Calu3 (cell line): ENCODE measurements at regions of chr2 and their contacts with region 1.

Region 1: GRCh38 chr2:96509114-96509846 is 4.1 kb upstream of the NEURL3 start:
- DNase-seq: peak; percentile 95
- H3K4me3 Mint-ChIP-seq: peak overlapping the region; percentile 7
- H3K27ac Mint-ChIP-seq: no peak overlapping the region
- H3K4me1 Mint-ChIP-seq: peaks cover 50% of the 10 kb centered on the region
- H3K27me3 Mint-ChIP-seq: peaks cover 13% of the 10 kb centered on the region
- CTCF ChIP-seq: peak; percentile 93

Region 2: DNA sequence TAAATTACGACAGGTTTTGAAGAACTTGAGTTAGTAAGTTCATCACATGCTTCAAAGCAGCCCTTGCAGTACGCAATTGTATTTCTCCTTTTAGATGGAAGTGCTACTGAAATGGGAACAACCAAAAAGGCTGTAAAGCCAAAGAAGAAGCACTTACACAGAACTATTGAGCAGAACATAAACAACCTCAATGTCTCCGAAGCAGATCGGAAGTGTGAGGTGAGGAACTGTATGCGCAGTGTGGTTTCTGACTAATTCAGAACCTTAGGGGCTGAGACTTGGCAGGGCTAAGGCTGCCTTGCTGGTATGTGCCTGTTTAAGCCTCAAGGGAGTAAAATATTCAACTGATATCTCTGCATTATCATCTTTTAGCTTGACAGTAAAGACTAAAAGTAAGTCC is 165.3 kb before region 1 on chr2:
- CTCF ChIA-PET with region 1: no interaction called
- intact Hi-C with region 1: loop called (anchors 5 kb)
- DNase-seq: no peak
- H3K4me3 Mint-ChIP-seq: no peak overlapping the region
- H3K27ac Mint-ChIP-seq: no peak overlapping the region
- H3K4me1 Mint-ChIP-seq: peaks cover 31% of the 10 kb centered on the region
- H3K27me3 Mint-ChIP-seq: no peaks in the 10 kb centered on the region
- CTCF ChIP-seq: no peak

Region 3: DNA sequence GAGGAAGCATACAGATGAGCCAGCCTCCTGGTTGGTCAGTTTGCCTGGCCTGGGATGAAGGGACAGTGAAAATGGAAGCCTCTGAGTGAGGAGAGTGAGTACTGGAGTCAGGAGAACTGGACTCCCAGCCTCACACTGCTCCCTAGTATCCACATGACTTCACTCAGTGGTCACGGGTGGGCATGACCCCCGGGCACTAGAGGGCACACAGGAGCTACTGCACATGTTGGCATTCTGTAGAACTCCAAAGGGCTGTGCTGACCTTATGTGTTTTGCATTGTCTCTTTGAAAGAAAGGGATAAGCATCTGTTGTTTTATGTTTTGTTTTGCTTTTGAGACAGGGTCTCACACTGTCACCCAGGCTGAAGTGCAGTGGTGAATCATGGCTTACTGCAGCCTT is 150.0 kb before region 1 on chr2:
- CTCF ChIA-PET with region 1: interaction called, 13 read pairs
- intact Hi-C with region 1: loop called (anchors 1 kb)
- DNase-seq: peak; percentile 50
- H3K4me3 Mint-ChIP-seq: no peak overlapping the region
- H3K27ac Mint-ChIP-seq: no peak overlapping the region
- H3K4me1 Mint-ChIP-seq: no peaks in the 10 kb centered on the region
- H3K27me3 Mint-ChIP-seq: no peaks in the 10 kb centered on the region
- CTCF ChIP-seq: peak; percentile 24

Region 4: GRCh38 chr2:96470636-96471035 is 38.6 kb before region 1 on chr2:
- CTCF ChIA-PET with region 1: no interaction called
- intact Hi-C with region 1: loop called (anchors 2 kb)
- DNase-seq: peak; percentile 84
- H3K4me3 Mint-ChIP-seq: peak overlapping the region; percentile 18
- H3K27ac Mint-ChIP-seq: no peak overlapping the region
- H3K4me1 Mint-ChIP-seq: peaks cover 11% of the 10 kb centered on the region
- H3K27me3 Mint-ChIP-seq: no peaks in the 10 kb centered on the region
- CTCF ChIP-seq: peak; percentile 89

Region 5: DNA sequence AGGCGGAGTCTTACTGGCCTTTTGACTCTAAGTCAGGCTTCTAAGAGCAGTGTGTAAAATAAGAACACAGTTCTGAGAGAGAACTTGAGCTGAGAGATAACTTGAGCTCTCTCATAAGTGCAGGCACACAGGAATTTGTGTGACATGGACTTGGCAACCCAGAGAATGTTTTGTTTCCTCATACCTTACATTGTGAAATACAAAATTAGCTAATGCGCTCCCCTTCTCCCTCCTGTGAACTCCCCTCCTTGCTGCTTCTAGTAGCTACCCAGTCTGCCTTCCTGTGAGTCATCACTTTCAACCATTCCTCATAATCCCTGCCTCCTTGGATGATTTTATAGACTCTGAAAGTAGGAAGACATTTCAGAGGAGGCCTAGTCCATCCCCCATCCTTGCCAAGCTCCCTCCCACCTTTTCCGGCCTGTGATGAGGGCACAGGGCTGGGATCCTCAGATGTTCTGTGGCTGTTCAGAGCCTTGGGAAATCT is 155.8 kb after region 1 on chr2:
- CTCF ChIA-PET with region 1: no interaction called
- intact Hi-C with region 1: no loop called
- DNase-seq: peak; percentile 68
- H3K4me3 Mint-ChIP-seq: peak overlapping the region; percentile 14
- H3K27ac Mint-ChIP-seq: peak overlapping the region; percentile 86
- H3K4me1 Mint-ChIP-seq: peaks cover 33% of the 10 kb centered on the region
- H3K27me3 Mint-ChIP-seq: peaks cover 12% of the 10 kb centered on the region
- CTCF ChIP-seq: no peak